GM10248 (cell line): ENCODE measurements at regions of chr7 and their contacts with region 1.

Region 1: DNA sequence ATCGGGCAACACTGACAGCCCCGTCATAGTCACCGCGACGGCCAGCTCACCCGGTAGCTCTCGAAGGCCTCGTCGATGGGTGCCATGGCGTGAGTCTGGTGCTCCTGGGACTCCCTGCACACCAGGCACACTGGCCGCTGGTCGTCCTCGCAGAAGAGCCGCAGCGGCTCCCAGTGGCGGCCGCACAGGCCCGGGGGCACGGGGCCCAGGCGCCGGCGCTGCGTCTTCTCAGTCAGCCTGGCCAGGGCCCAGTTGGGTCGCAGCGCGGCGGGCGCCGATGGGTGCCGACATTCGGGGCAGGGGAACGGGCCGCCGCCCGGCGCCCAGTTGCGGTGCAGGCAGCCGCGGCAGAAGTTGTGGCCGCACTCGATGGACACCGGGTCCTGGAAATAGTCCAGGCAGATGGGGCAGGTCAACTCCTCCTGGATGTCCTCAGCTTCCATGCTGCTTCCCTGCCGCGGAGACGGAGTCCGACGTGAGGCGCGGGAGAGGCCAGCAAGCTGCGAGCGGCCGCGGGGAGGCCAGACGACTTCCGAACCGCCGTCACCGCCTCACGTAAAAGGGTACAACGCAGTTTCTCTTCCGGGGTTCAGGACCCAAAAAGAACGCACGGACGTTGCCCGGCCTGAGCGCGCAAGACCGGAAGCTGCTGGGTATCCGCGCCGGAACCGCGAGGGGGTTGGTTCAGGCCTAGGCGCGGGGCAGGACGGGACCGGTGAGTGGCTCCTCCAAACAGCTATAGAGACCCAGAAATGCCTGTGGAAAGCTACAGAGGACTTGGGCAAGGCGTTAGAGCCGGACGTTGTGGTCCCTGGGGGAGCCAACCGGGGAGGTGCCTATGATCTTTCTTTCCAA is at the start of gene TRIM4:
- DNase-seq: peak; percentile 95
- CTCF ChIP-seq: peak; percentile 27

Region 2: GRCh38 chr7:99975782-99976521 is 56.8 kb after region 1 on chr7 and contains the start of gene AZGP1:
- CTCF ChIA-PET with region 1: interaction called, 18 read pairs
- POLR2A ChIA-PET with region 1: no interaction called
- DNase-seq: no peak
- CTCF ChIP-seq: no peak